AG04449 (cell line): ENCODE measurements at regions of chr1 and their contacts with region 1.

Region 1: GRCh38 chr1:182084487-182085316 is 23.2 kb upstream of the ZNF648 start:
- DNase-seq: no peak
- H3K4me3 ChIP-seq: no peak overlapping the region
- CTCF ChIP-seq: peak; percentile 80

Region 2: GRCh38 chr1:181479137-181479745 is 605.5 kb before region 1 on chr1:
- CTCF ChIA-PET with region 1: interaction called, 58 read pairs
- POLR2A ChIA-PET with region 1: no interaction called
- DNase-seq: peak; percentile 16
- H3K4me3 ChIP-seq: no peak overlapping the region
- CTCF ChIP-seq: peak; percentile 71

Region 3: DNA sequence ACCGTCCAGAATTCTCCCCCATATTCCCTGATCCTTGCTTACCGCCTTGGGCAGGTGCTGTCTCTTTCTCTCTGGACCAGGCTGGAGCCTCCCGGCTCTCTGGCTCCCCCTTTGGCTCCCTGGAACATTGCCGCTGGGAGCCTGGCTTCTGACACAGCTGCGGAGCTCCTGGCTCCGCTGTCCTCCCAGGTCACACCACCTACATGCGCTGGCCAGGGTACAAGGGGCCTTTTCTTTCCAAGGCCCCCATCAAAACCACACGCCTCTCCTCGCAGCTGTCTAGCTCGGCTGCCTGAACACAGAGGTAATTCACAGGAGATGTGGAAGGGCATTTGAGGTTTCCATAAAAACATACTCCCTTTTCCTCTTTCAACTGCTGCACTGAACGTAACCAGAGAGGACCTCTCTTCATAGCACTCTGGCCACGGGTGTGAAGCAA is 15.7 kb before region 1 on chr1:
- CTCF ChIA-PET with region 1: interaction called, 17 read pairs
- POLR2A ChIA-PET with region 1: no interaction called
- DNase-seq: no peak
- H3K4me3 ChIP-seq: no peak overlapping the region
- CTCF ChIP-seq: peak; percentile 71

Region 4: DNA sequence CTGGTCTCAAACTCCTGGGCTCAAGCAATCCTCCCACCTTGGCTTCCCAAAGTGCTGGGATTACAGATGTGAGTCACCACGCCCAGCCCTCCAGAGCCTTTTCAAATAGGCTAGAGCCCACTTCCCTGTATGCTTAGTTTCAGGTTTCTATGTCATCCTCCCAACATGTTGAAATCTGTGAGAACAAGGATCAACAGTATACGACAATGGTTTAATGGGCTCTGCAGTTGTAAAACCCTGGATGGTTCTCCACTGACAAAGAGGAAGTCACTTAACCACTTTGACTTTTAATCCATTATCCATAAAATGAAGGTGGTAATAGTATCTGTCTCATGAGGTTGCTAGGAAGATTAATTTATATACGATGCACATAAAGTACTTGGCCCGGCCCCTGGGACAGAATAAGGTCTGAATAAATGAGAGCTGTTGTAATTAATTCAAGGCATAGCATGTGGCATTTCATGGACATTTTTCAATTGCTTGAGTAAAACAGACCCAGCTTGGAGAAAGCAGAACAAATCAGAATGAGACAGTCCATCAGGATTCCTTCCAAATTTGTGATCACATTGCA is 90.7 kb after region 1 on chr1:
- CTCF ChIA-PET with region 1: no interaction called
- POLR2A ChIA-PET with region 1: no interaction called
- DNase-seq: no peak
- H3K4me3 ChIP-seq: no peak overlapping the region
- CTCF ChIP-seq: no peak

Region 5: DNA sequence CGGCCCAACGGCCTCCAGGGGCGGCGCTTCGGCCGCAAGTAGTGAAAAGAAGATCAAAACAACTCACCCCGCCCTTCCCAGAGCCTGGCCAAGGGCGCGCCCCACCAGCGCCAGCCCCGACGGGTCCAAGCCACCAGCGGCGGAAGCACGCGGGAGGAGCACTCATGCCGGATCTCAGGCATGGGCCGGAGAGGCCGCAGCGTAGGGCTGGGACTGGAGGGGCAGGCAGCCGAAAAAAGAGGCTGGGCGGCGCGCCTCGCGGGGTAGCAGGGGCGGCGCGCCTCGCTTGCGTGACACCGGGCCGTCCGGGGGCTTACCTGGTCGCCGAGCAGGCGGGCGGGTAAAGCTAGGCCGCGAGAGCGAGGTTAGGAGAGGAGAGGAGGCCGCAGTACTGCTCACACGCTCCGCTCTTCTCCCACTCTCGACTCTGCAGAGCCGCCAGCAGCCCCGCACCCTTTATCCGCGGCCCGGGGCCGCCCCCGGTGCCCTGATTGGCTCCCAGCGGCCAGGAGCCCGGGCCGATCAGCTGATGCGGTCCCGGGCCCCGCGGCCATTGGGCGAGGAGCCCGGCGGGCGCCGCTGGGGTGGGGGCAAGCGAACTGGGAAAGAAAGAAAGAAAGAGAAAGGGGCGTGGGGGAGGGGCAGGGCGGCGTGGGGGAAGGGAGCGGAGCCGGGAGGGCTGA is 306.8 kb after region 1 on chr1 and contains the start of gene GLUL:
- CTCF ChIA-PET with region 1: interaction called, 205 read pairs
- POLR2A ChIA-PET with region 1: interaction called, 3 read pairs
- DNase-seq: peak; percentile 29
- H3K4me3 ChIP-seq: peak within 1 kb of the TSS; percentile 80
- CTCF ChIP-seq: no peak